ENCODE measurements at regions of chr15 and their contacts with region 1.

Region 1: DNA sequence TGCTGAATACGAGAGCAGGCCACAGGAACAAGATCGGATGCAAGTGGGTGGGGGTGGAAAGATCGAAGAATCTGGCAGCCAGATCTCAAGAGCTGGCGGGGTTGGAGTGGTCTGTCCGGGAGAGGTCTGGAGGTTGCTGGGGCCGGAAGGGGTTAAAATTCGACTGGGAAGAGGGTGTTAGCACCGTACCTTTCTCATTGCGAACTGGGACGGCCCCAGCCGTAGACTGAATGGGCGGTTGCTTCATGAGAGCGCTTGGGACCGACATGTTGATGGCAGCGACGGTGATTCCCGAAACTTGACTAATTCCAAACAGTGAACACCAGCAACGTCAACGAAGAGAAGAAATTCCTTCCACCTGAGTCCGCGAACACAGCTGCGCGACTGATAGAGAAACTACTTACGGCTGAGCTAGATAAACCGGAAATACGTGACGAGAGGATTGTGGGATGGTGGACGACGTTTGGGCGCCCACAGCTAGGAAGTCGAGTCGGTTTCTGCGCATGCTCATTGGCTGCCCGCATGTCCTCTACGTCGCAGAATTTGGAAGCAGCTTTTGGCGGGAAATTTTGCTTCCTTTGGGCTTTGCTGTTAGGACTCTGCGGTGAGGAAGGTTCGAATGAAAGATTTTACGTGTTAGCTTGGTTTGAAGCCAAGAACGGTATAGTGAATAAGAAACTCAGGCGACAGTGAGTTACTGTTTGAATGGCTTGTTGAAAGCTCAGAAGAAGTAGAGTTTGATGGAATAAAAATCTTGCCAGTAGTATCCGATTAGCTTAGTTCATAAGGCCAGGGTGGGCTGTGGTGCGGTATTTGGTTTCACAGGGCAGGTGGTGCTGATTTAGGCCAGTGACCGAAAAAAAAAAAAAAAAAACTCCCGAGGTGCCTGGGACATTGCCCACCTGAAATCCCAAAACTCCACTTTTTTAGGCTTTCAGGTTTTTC is at the start of gene MFAP1:
- DNase-seq: peak; percentile 95
- H3K4me3 Mint-ChIP-seq: peak within 1 kb of the TSS; percentile 100
- H3K27ac Mint-ChIP-seq: peak within 1 kb of the TSS; percentile 99
- H3K4me1 Mint-ChIP-seq: peaks cover 20% of the 10 kb centered on the region
- H3K27me3 Mint-ChIP-seq: no peaks in the 10 kb centered on the region
- CTCF ChIP-seq: no peak
- total RNA-seq, gene MFAP1: 23.0 and 26.5 TPM in 2 replicates

Region 2: DNA sequence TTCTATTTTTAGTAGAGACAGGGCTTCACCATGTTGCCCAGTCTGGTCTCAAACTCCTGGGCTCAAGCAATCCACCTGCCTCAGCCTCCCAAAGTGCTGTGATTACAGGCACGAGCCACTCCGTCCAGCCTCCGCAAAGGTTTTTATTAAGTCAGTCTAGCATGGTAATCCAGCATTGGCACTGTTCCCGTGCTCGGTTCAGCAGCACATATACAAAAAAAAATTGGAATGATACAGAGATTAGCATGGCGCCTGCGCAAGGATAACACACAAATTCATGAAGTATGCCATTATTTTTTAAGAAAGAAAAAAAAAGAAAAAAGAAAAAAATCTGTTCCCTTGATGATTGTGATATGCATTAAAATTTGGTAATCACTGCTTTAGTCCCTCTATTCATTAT is 122.4 kb before region 1 on chr15:
- CTCF ChIA-PET with region 1: no interaction called
- POLR2A ChIA-PET with region 1: no interaction called
- intact Hi-C with region 1: no loop called
- DNase-seq: no peak
- H3K4me3 Mint-ChIP-seq: no peak overlapping the region
- H3K27ac Mint-ChIP-seq: no peak overlapping the region
- H3K4me1 Mint-ChIP-seq: no peaks in the 10 kb centered on the region
- H3K27me3 Mint-ChIP-seq: no peaks in the 10 kb centered on the region
- CTCF ChIP-seq: no peak

Region 3: DNA sequence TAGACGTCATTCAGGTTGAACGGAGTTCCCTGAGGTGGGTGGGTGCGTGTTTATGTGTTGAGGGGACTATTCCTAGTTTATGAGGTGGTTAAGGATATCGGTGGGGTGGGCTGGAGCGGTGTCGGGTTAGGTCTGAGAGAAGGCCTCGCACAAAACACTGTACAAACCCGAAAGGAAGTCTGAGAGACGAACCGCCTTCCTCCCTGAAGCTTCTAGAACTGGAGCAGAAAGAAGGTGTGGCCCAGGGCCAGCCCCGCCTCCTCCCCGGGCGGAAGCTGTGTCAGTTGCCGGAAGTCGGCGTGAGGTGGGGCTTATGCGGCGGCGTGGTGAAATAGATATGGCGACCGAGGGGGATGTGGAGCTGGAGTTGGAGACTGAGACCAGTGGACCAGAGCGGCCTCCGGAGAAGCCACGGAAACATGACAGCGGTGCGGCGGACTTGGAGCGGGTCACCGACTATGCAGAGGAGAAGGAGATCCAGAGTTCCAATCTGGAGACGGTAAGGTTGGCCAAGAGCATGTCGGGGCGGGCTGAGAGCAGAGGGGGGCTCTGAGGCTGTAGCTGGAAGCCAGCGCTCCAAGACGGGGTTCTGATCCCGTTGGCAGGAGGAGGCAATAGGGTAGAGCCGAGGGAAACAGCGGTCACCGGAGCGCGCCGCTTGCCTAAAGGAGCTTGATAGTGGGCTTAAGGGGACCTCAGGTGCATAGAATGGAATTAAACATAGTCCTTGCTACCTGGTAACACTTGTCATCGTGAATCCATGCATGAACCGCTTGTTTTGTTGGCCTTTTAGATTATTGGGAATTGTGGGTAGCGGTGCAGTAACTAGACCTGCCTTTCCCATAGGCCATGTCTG is 24.1 kb before region 1 on chr15 and contains the start of gene HYPK:
- CTCF ChIA-PET with region 1: interaction called, 4 read pairs
- POLR2A ChIA-PET with region 1: interaction called, 99 read pairs
- intact Hi-C with region 1: no loop called
- DNase-seq: peak; percentile 87
- H3K4me3 Mint-ChIP-seq: peak within 1 kb of the TSS; percentile 90
- H3K27ac Mint-ChIP-seq: peak within 1 kb of the TSS; percentile 97
- H3K4me1 Mint-ChIP-seq: peaks cover 33% of the 10 kb centered on the region
- H3K27me3 Mint-ChIP-seq: no peaks in the 10 kb centered on the region
- CTCF ChIP-seq: no peak
- total RNA-seq, gene HYPK: 31.1 and 34.5 TPM in 2 replicates

Region 4: DNA sequence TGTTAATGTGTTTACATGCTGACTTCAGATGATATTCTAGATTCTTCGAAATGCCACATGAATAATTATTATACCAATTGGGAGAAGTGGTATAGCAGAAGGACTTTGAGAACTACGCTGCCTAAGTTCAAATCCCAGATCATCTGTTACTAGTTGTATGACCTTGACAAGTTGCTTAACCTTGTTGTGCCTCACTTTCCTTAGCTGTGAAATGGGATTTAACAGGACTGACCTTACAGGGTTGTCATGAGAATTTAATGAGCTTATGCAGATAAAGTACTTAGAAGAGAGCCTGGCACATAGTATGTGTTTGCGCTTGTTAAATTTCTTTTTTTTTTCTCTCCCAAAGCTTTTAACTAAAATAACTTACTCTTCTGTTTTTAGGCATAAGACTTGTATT is 26.7 kb after region 1 on chr15:
- CTCF ChIA-PET with region 1: no interaction called
- POLR2A ChIA-PET with region 1: no interaction called
- intact Hi-C with region 1: no loop called
- DNase-seq: no peak
- H3K4me3 Mint-ChIP-seq: no peak overlapping the region
- H3K27ac Mint-ChIP-seq: no peak overlapping the region
- H3K4me1 Mint-ChIP-seq: no peaks in the 10 kb centered on the region
- H3K27me3 Mint-ChIP-seq: no peaks in the 10 kb centered on the region
- CTCF ChIP-seq: no peak

Measured in MCF 10A (cell line).